Activated CD4-positive, alpha-beta T cell treated with anti-CD3 and anti-CD28 coated beads for 36 hours (primary cell): ENCODE measurements at regions of chr1 and their contacts with region 1.

Region 1: DNA sequence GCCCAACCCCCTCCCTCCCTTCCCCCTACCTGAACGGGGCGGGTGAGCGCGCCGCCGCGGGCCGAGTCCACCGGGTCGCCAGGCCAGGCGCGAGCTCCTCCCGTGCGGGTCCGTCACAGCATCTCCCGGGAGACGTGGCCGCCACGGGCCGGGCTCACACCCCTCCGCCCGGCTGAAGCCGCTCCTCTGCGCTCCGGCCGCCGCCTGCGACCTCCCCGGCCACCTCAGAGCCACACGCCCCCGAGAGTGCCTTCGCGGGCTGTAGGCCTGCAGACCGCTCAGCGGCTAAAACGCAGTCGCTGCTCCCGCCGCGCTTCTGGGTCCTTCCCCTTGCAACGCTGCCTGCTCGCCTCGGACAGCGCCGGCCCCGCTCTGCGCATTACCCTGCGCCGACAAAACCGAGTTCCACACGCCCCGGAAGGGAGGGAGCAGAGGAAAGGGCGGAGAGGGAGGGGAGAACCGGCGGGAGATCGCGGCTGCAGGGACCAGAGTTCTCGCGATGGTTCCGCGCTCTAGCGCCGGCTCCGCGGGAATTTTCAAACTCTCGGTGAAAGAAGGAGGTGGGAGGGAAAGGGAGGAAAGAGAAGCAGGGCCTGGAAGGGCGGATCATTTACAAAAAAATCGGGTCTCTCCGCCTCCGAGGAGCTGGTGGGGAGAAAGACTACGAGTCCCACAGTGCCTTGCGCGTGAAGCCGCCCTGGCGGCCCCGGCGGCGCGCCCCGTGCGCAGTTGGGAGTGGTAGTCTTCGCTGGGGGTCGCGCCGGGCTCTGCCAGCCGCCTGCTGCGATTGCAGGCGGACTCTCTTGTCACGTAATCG is at the start of gene AHCTF1:
- DNase-seq: peak; percentile 96
- ATAC-seq: peak; percentile 94
- H3K4me3 Mint-ChIP-seq: peak within 1 kb of the TSS; percentile 97
- H3K27ac Mint-ChIP-seq: peak within 1 kb of the TSS; percentile 94
- H3K4me1 Mint-ChIP-seq: peaks cover 28% of the 10 kb centered on the region
- H3K27me3 Mint-ChIP-seq: no peaks in the 10 kb centered on the region
- total RNA-seq, gene AHCTF1: 38.8 to 54.4 TPM

Region 2: GRCh38 chr1:246724016-246724730 is 207.6 kb before region 1 on chr1 and contains the start of gene SCCPDH:
- CTCF ChIA-PET with region 1: no interaction called
- POLR2A ChIA-PET with region 1: no interaction called
- intact Hi-C with region 1: loop called in 1 of 2 experiments (anchors 2 kb)
- DNase-seq: peak; percentile 84
- ATAC-seq: peak; percentile 96
- H3K4me3 Mint-ChIP-seq: peak within 1 kb of the TSS; percentile 83
- H3K27ac Mint-ChIP-seq: peak within 1 kb of the TSS; percentile 84
- H3K4me1 Mint-ChIP-seq: peaks cover 8% of the 10 kb centered on the region
- H3K27me3 Mint-ChIP-seq: no peaks in the 10 kb centered on the region
- total RNA-seq, gene SCCPDH: 17.1 to 28.6 TPM

Region 3: DNA sequence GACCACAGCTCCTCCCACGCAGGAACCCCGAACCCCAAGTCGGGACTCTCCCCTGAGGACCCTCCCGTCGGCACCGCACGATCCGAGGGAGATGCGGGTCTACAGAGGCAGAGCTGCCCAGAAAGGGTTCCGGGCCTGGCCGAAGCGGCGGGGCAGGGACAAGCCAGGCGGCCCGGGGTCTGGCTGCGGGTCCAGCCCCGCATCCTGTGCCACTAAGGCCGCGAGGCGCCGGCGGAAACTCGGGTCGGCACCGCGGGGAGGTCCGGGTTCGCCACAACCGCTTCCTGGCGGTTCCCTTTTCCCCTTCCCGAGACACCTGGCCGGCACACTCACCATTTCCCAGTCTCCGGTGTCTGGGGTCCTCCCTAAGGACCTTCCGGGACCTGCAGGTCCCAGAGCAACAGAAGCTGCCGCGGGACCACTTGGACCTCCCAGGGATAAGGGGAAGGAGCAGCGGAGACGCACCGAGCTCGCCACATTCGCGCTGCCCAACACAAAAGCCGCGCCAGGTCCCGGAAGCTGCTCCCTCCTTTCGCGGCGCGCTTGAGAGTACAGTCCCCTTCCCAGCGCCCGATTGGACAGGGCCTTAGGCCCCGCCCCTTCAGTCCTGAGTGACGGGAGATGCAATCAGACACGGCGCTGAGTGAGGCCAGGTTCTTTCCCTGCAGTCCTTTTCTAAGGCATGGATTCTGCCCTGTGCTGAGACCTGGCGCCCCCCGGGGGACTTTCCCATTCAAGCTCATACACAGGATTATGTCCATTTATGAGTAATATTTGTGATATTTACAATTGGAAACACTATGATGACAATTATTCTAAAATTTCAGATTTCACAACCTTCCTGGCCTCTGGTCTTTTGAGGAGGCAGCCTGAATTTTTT is 146.7 kb after region 1 on chr1 and contains the start of gene ZNF670:
- CTCF ChIA-PET with region 1: no interaction called
- POLR2A ChIA-PET with region 1: no interaction called
- intact Hi-C with region 1: loop called (anchors 1 kb)
- DNase-seq: peak; percentile 97
- ATAC-seq: peak; percentile 100
- H3K4me3 Mint-ChIP-seq: peak within 1 kb of the TSS; percentile 89
- H3K27ac Mint-ChIP-seq: peak within 1 kb of the TSS; percentile 91
- H3K4me1 Mint-ChIP-seq: peaks cover 27% of the 10 kb centered on the region
- H3K27me3 Mint-ChIP-seq: peaks cover 5% of the 10 kb centered on the region
- total RNA-seq, gene ZNF670: 4.3 to 4.9 TPM

Region 4: GRCh38 chr1:247210376-247211117 is 278.8 kb after region 1 on chr1:
- CTCF ChIA-PET with region 1: no interaction called
- POLR2A ChIA-PET with region 1: interaction called, 4 read pairs
- intact Hi-C with region 1: loop called (anchors 1 kb)
- DNase-seq: peak; percentile 98
- ATAC-seq: peak; percentile 100
- H3K4me3 Mint-ChIP-seq: peak overlapping the region; percentile 89
- H3K27ac Mint-ChIP-seq: peak overlapping the region; percentile 91
- H3K4me1 Mint-ChIP-seq: peaks cover 60% of the 10 kb centered on the region
- H3K27me3 Mint-ChIP-seq: no peaks in the 10 kb centered on the region

Region 5: GRCh38 chr1:247407180-247407616 is 475.4 kb after region 1 on chr1:
- CTCF ChIA-PET with region 1: no interaction called
- POLR2A ChIA-PET with region 1: no interaction called
- intact Hi-C with region 1: loop called in 1 of 2 experiments (anchors 10 kb)
- DNase-seq: peak; percentile 84
- ATAC-seq: peak; percentile 85
- H3K4me3 Mint-ChIP-seq: peak overlapping the region; percentile 24
- H3K27ac Mint-ChIP-seq: peak overlapping the region; percentile 72
- H3K4me1 Mint-ChIP-seq: peaks cover 41% of the 10 kb centered on the region
- H3K27me3 Mint-ChIP-seq: peaks cover 2% of the 10 kb centered on the region